ENCODE measurements at regions of chr21 and their contacts with region 1.

Region 1: GRCh38 chr21:16082038-16082816 is 352.4 kb downstream of the USP25 start:
- DNase-seq: peak; percentile 22
- ATAC-seq: no peak
- H3K4me3 ChIP-seq: no peak overlapping the region
- H3K27ac ChIP-seq: no peak overlapping the region
- H3K4me1 ChIP-seq: no peaks in the 10 kb centered on the region
- H3K27me3 ChIP-seq: no peaks in the 10 kb centered on the region
- CTCF ChIP-seq: peak; percentile 50
- POLR2A ChIP-seq: no peak
- RAD21 ChIP-seq: peak; percentile 53

Region 2: GRCh38 chr21:15894596-15894995 is 187.6 kb before region 1 on chr21:
- CTCF ChIA-PET with region 1: no interaction called
- POLR2A ChIA-PET with region 1: no interaction called
- dilution Hi-C with region 1: no loop called
- in situ Hi-C with region 1: no loop called
- intact Hi-C with region 1: loop called (anchors 10 kb)
- DNase-seq: peak; percentile 38
- ATAC-seq: peak; percentile 74
- H3K4me3 ChIP-seq: no peak overlapping the region
- H3K27ac ChIP-seq: no peak overlapping the region
- H3K4me1 ChIP-seq: peaks cover 2% of the 10 kb centered on the region; the same call in 1 of the 2 replicates
- H3K27me3 ChIP-seq: no peaks in the 10 kb centered on the region
- CTCF ChIP-seq: peak; percentile 58
- POLR2A ChIP-seq: no peak
- RAD21 ChIP-seq: peak; percentile 52

Region 3: GRCh38 chr21:16002874-16003466 is 79.3 kb before region 1 on chr21:
- CTCF ChIA-PET with region 1: no interaction called
- POLR2A ChIA-PET with region 1: no interaction called
- dilution Hi-C with region 1: no loop called
- in situ Hi-C with region 1: no loop called
- intact Hi-C with region 1: loop called (anchors 5 kb)
- DNase-seq: peak; percentile 51
- ATAC-seq: peak; percentile 75; the same call in 1 of the 2 replicates
- H3K4me3 ChIP-seq: no peak overlapping the region
- H3K27ac ChIP-seq: no peak overlapping the region
- H3K4me1 ChIP-seq: no peaks in the 10 kb centered on the region
- H3K27me3 ChIP-seq: no peaks in the 10 kb centered on the region
- CTCF ChIP-seq: peak; percentile 67
- POLR2A ChIP-seq: no peak
- RAD21 ChIP-seq: peak; percentile 67

Region 4: GRCh38 chr21:16013570-16013969 is 68.7 kb before region 1 on chr21:
- CTCF ChIA-PET with region 1: no interaction called
- POLR2A ChIA-PET with region 1: no interaction called
- dilution Hi-C with region 1: no loop called
- in situ Hi-C with region 1: no loop called
- intact Hi-C with region 1: no loop called
- DNase-seq: no peak
- ATAC-seq: no peak
- H3K4me3 ChIP-seq: no peak overlapping the region
- H3K27ac ChIP-seq: no peak overlapping the region
- H3K4me1 ChIP-seq: no peaks in the 10 kb centered on the region
- H3K27me3 ChIP-seq: no peaks in the 10 kb centered on the region
- CTCF ChIP-seq: no peak
- POLR2A ChIP-seq: no peak
- RAD21 ChIP-seq: no peak

Region 5: GRCh38 chr21:16324630-16325029 is 242.4 kb after region 1 on chr21:
- CTCF ChIA-PET with region 1: interaction called, 9 read pairs
- POLR2A ChIA-PET with region 1: no interaction called
- dilution Hi-C with region 1: no loop called
- in situ Hi-C with region 1: loop called (anchors 5 kb)
- intact Hi-C with region 1: no loop called
- DNase-seq: no peak
- ATAC-seq: no peak
- H3K4me3 ChIP-seq: no peak overlapping the region
- H3K27ac ChIP-seq: no peak overlapping the region
- H3K4me1 ChIP-seq: no peaks in the 10 kb centered on the region
- H3K27me3 ChIP-seq: no peaks in the 10 kb centered on the region
- CTCF ChIP-seq: no peak
- POLR2A ChIP-seq: no peak
- RAD21 ChIP-seq: no peak

Region 6: DNA sequence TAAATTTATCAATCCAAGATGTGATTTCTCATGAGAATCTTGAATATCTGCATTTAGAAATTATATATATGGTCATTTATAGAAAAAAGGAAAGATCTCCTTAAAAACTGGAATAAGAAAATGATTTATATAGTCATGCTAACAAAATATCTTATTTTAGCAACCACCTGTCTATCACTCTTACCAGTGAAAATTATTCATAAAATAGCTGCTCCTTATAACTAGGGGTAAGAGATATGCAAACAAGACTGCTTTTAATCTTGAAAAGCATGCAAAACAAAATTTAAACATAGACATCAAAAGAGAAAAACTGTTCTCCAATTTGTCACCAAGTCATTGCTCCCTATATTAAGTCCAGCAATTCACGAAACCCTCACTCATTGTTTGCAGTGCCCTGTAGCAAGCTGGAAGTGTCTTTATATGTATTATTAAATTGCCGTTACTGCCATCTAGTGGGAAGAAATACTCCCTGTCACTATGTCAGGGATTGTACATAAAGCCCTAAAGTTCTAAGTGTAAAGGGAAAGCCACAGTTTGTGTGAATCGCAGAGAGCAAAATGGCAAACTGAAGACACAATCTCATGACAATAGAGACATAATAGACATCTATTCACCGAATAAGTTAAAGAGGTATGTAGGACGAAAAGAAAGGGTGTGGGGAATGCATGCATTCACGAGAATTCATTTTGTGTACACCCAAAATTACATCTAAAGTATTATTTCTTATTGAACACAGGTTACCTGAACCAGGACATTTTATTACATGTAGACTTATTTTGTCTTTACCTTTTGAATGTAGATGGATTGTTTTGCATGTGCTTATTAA is 248.1 kb after region 1 on chr21:
- CTCF ChIA-PET with region 1: interaction called, 9 read pairs
- POLR2A ChIA-PET with region 1: no interaction called
- dilution Hi-C with region 1: no loop called
- in situ Hi-C with region 1: loop called (anchors 5 kb)
- intact Hi-C with region 1: loop called (anchors 1 kb)
- DNase-seq: peak; percentile 75
- ATAC-seq: peak; percentile 97
- H3K4me3 ChIP-seq: no peak overlapping the region
- H3K27ac ChIP-seq: no peak overlapping the region
- H3K4me1 ChIP-seq: no peaks in the 10 kb centered on the region
- H3K27me3 ChIP-seq: no peaks in the 10 kb centered on the region
- CTCF ChIP-seq: peak; percentile 78
- POLR2A ChIP-seq: no peak
- RAD21 ChIP-seq: peak; percentile 70

Region 7: DNA sequence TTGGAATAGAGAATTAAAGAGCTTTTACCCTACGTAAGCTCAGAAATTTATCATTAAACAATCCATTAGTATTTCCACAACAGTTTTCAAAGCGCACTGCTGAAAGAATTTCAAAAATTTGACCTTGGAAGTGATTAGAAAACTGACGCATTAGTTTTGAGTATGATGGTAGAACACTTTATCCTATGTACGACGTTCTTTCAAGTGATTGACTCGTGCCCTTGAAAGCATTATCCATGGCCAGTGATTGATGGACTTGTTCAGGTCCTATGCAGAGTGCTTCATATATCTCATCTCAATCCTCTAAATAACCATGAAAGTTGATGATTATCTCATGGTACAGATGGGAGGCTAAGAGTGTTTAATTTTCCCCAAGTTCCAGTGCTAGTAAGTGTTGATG is 344.7 kb after region 1 on chr21:
- CTCF ChIA-PET with region 1: no interaction called
- POLR2A ChIA-PET with region 1: no interaction called
- dilution Hi-C with region 1: no loop called
- in situ Hi-C with region 1: no loop called
- intact Hi-C with region 1: loop called (anchors 5 kb)
- DNase-seq: no peak
- ATAC-seq: no peak
- H3K4me3 ChIP-seq: no peak overlapping the region
- H3K27ac ChIP-seq: no peak overlapping the region
- H3K4me1 ChIP-seq: no peaks in the 10 kb centered on the region
- H3K27me3 ChIP-seq: no peaks in the 10 kb centered on the region
- CTCF ChIP-seq: no peak
- POLR2A ChIP-seq: no peak
- RAD21 ChIP-seq: no peak

Measured in IMR-90 (cell line).